K562 (cell line): ENCODE measurements at regions of chr5 and their contacts with region 1.

Region 1: DNA sequence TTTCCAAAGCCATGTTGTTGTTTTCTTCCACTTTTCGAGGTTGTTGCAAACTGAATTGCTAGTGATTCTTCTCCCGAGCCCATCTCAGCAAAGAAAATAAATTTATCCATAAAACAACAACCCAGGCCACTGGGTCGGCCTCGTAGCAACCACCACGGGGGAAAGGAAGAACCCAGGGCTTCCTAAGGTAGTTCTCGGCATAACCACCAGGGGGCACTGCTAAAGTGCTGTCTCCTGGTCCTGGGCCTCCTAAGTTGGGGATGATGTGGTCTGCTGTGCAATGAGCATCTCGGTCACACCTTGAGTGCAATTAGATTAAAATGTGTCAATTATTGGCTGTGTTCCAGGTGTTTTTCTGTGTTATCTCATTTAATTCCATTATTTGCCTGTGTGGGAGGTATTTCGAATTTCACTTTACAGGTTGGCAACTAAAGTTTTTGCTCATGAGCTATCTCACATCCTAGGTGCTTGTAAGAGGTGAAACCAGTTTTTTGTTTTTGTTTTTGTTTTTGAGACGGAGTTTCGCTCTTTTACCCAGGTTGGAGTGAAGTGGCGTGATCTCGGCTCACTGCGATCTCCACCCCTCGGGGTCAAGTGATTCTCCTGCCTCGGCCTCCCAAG is 102.8 kb upstream of the DAP start:
- DNase-seq: peak; percentile 80 to 90 (median 88)
- ATAC-seq: peak; percentile 95
- H3K4me3 ChIP-seq: no peak overlapping the region
- H3K27ac ChIP-seq: no peak overlapping the region
- H3K4me1 ChIP-seq: no peaks in the 10 kb centered on the region
- H3K27me3 ChIP-seq: peaks cover 30 to 44% of the 10 kb centered on the region in 2 experiments
- CTCF ChIP-seq: peak; percentile 84 to 97 (median 84)
- EP300 ChIP-seq: no peak
- POLR2A ChIP-seq: no peak
- RAD21 ChIP-seq: peak; percentile 45 to 71

Region 2: DNA sequence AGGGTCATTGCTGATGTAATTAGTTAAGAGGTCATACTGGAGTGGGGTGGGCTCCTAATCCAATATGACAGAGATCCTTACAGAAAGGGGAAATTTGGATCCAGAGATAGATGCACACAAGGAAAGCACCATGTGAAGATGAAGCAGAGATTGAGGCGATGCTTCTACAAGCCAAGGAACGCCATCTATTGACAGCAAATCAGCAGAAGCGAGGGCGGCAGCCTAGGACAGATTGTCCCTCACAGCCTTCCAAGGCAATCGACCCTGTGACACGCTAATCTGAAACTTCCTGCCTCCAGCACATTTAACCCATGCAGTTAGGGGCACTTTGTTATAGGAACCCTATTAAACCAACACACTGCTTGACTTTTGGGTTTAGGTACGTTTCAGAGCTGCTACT is 182.3 kb after region 1 on chr5:
- CTCF ChIA-PET with region 1: no interaction called
- POLR2A ChIA-PET with region 1: interaction called, 3 read pairs
- in situ Hi-C with region 1: no loop called
- intact Hi-C with region 1: loop called (anchors 10 kb)
- DNase-seq: peak in 1 of 4 experiments; percentile 13
- ATAC-seq: peak; percentile 37; the same call in 1 of the 3 replicates
- H3K4me3 ChIP-seq: no peak overlapping the region
- H3K27ac ChIP-seq: no peak overlapping the region
- H3K4me1 ChIP-seq: no peaks in the 10 kb centered on the region
- H3K27me3 ChIP-seq: no peaks in the 10 kb centered on the region
- CTCF ChIP-seq: peak in 2 of 3 experiments; percentile 18 to 32; a peak in 1 of 6 replicates
- EP300 ChIP-seq: no peak
- POLR2A ChIP-seq: no peak
- RAD21 ChIP-seq: peak in 1 of 2 experiments; percentile 44; a peak in 2 of 4 replicates

Region 3: DNA sequence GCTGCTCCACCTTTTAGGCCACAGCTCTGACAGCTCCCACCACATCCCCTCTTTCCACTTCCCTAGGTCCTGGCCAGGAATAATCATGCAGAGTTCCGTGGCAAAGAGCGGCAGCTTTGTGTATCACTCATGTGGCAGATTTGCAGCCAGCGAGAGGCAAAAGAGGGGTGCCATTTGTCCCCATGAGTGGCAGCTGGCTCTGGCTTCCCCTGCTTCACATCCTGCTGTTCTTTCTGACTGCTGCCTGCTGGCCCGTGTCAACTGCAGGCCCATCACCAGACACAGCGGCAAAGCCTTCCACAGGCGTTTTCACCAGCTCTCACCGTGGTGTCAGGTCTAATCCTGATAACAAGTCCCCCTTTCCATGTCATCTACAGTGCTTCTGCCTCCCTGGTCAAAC is 327.8 kb after region 1 on chr5:
- CTCF ChIA-PET with region 1: no interaction called
- POLR2A ChIA-PET with region 1: no interaction called
- in situ Hi-C with region 1: no loop called
- intact Hi-C with region 1: loop called (anchors 10 kb)
- DNase-seq: no peak
- ATAC-seq: no peak
- H3K4me3 ChIP-seq: no peak overlapping the region
- H3K27ac ChIP-seq: no peak overlapping the region
- H3K4me1 ChIP-seq: no peaks in the 10 kb centered on the region
- H3K27me3 ChIP-seq: peaks cover 0 to 3% of the 10 kb centered on the region in 2 experiments; a peak in 1 of 5 replicates
- CTCF ChIP-seq: no peak
- EP300 ChIP-seq: no peak
- POLR2A ChIP-seq: no peak
- RAD21 ChIP-seq: no peak

Region 4: DNA sequence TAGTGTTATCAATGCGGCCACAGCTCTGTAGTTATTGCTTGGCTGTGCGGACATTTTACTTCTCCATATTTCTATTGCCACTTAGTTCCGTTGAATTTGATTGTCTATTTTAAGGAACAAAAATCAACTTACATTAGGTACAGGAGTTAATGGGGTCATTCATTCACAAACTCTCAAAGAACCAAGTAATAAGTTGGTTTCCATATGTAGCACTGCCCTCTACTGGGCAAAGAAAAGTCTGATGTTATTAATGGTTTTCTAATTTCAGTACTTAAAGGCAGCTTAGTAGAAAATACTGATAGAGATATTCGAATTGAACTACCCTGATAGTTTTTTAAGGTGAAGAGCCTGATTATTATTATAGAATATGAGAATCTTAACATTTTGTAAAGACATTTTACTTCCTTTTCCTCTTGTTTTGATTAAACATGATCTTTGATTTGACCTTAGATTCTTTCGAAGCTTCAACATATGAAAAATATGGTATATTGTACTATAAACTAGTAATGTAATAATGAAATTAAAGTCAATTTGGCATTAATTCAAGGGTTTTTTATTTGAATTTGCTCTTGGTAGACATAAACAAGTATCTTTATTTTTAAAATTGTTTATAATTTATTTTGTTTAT is 1159.9 kb after region 1 on chr5:
- CTCF ChIA-PET with region 1: no interaction called
- POLR2A ChIA-PET with region 1: no interaction called
- in situ Hi-C with region 1: no loop called
- intact Hi-C with region 1: loop called (anchors 10 kb)
- DNase-seq: peak in 3 of 4 experiments; percentile 4 to 44 (median 14)
- ATAC-seq: no peak
- H3K4me3 ChIP-seq: no peak overlapping the region
- H3K27ac ChIP-seq: no peak overlapping the region
- H3K4me1 ChIP-seq: no peaks in the 10 kb centered on the region
- H3K27me3 ChIP-seq: no peaks in the 10 kb centered on the region
- CTCF ChIP-seq: peak in 2 of 3 experiments; percentile 33 to 51; a peak in 2 of 6 replicates
- EP300 ChIP-seq: no peak
- POLR2A ChIP-seq: no peak
- RAD21 ChIP-seq: peak; percentile 37 to 61